Tibial artery (tissue), 4 donors: ENCODE measurements at regions of chr9 and their contacts with region 1.

Region 1: GRCh38 chr9:111037381-111038305 is 627 bp downstream of the LPAR1 start:
- DNase-seq: peak; percentile 25 to 71
- H3K4me3 ChIP-seq: peak overlapping the region; percentile 84 to 94
- H3K27ac ChIP-seq: peak overlapping the region; percentile 93 to 94
- H3K4me1 ChIP-seq: peaks cover 0 to 58% (median 18%) of the 10 kb centered on the region in 4 donors
- H3K27me3 ChIP-seq: no peaks in the 10 kb centered on the region
- CTCF ChIP-seq: no peak

Region 2: DNA sequence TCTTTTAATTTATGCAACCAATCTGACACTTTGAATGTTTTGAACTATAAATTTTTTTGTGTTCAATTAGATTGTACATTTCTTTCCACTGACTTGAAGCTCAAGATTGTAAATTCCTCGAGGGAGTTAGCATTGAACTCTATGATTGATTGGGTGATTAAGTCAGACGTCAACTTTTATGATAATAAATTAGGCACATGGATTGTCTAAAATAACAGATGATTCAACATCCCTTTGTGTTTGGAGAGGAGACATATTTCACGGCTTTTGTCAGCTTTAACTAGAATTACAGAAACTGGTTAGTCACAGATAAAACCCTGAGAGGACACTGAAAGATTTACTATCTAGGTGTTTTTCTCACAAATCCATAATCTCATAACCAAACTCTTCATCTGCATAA is 667.3 kb before region 1 on chr9:
- intact Hi-C with region 1: no loop called
- DNase-seq: no peak
- H3K4me3 ChIP-seq: no peak overlapping the region
- H3K27ac ChIP-seq: no peak overlapping the region
- H3K4me1 ChIP-seq: no peaks in the 10 kb centered on the region
- H3K27me3 ChIP-seq: no peaks in the 10 kb centered on the region
- CTCF ChIP-seq: no peak

Region 3: GRCh38 chr9:110650991-110651411 is 386.6 kb before region 1 on chr9:
- intact Hi-C with region 1: loop called (anchors 5 kb)
- DNase-seq: peak in 1 of 2 donors; percentile 37
- H3K4me3 ChIP-seq: no peak overlapping the region
- H3K27ac ChIP-seq: peak overlapping the region; percentile 60 to 64
- H3K4me1 ChIP-seq: peaks cover 0 to 35% (median 2%) of the 10 kb centered on the region in 4 donors
- H3K27me3 ChIP-seq: no peaks in the 10 kb centered on the region
- CTCF ChIP-seq: no peak

Region 4: GRCh38 chr9:110828264-110828663 is 209.4 kb before region 1 on chr9:
- intact Hi-C with region 1: no loop called
- DNase-seq: peak in 1 of 2 donors; percentile 72
- H3K4me3 ChIP-seq: no peak overlapping the region
- H3K27ac ChIP-seq: peak overlapping the region; percentile 39 to 54
- H3K4me1 ChIP-seq: peaks cover 0 to 15% (median 2%) of the 10 kb centered on the region in 4 donors
- H3K27me3 ChIP-seq: no peaks in the 10 kb centered on the region
- CTCF ChIP-seq: no peak

Region 5: GRCh38 chr9:110977259-110977709 is 60.4 kb before region 1 on chr9:
- intact Hi-C with region 1: no loop called
- DNase-seq: no peak
- H3K4me3 ChIP-seq: no peak overlapping the region
- H3K27ac ChIP-seq: no peak overlapping the region
- H3K4me1 ChIP-seq: peaks cover 0 to 61% (median 12%) of the 10 kb centered on the region in 4 donors
- H3K27me3 ChIP-seq: no peaks in the 10 kb centered on the region
- CTCF ChIP-seq: no peak